ENCODE measurements at regions of chr1 and their contacts with region 1.

Region 1: DNA sequence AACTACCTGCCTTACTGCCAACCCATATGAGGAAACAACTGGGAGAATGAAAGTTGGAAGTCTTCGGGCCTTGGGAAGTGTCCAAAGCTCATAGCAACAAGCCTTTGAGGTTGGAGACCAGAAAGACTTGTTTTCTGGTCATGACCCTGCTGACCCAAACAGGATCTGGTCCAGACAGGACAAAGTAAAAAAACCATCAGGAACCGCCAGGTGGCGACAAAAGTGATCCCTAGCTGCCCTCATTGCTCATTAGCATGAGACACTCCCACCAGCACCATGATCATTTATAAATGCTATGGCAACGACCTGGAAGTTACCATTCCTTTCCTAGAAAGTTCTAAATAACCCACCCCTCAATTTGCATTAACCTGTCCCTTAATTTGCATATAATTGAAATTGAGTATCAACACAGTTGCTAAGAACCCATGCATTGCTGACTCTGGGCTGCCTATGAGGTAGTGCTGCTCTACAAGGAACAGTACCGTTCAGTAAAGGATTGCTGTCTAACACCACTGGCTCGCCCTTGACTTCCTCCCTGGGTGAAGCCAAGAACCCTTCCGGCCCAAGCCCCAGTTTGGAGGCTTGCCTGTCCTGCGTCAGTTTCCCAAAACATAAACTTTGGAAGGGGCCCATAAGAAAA is 89.0 kb downstream of the URB2 start:
- DNase-seq: peak; percentile 47 to 84 (median 52)
- ATAC-seq: peak; percentile 94
- H3K4me3 ChIP-seq: no peak overlapping the region
- H3K27ac ChIP-seq: no peak overlapping the region
- H3K4me1 ChIP-seq: no peaks in the 10 kb centered on the region
- H3K27me3 ChIP-seq: no peaks in the 10 kb centered on the region
- CTCF ChIP-seq: peak; percentile 75 to 87 (median 83)
- EP300 ChIP-seq: no peak
- POLR2A ChIP-seq: no peak
- RAD21 ChIP-seq: peak; percentile 59 to 85

Region 2: GRCh38 chr1:229781453-229781852 is 66.4 kb after region 1 on chr1:
- CTCF ChIA-PET with region 1: no interaction called
- POLR2A ChIA-PET with region 1: no interaction called
- in situ Hi-C with region 1: no loop called
- intact Hi-C with region 1: no loop called
- DNase-seq: no peak
- ATAC-seq: no peak
- H3K4me3 ChIP-seq: no peak overlapping the region
- H3K27ac ChIP-seq: no peak overlapping the region
- H3K4me1 ChIP-seq: no peaks in the 10 kb centered on the region
- H3K27me3 ChIP-seq: peaks cover 31 to 58% of the 10 kb centered on the region in 2 experiments
- CTCF ChIP-seq: no peak
- EP300 ChIP-seq: no peak
- POLR2A ChIP-seq: no peak
- RAD21 ChIP-seq: no peak

Region 3: DNA sequence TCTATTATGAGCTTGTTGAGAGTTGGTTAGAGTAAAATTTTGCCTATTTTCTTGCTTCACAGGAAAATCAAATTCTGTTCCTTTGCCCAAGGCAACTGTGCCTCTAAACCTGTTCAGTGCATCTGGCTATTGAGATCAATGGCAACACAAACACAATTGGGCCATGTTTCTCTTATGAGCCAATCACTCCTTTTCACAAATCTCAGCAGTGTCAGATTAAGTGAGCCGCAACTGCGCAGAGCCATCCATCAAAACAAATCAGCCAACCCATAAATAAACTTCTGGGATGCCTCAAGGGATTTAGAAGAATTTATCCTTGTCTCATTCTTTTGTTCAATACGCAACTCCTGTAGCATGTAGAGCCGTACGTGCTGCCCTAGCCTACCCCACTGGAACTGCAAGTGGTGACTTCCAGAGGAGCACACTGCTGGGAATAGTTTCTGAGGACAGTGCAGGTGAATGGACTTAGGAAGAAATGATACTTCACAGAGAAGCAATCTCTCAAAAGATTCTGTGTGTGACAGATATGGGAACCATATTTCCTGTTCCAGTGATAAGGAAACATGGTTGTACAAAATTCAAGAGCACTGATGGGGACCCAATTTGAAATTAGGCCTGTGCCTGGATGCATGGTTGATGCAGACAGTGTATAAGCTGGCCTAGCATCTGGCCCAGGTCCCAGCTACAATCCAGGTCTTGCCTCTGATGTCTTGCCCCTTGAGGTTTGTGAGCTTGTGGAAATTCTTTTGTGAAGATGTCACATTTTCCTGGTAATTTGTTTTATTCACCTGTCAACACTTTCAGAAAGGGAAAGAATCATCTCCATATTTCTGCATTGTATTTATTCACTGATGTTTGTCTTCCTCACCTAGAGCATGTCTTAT is 77.2 kb after region 1 on chr1:
- CTCF ChIA-PET with region 1: no interaction called
- POLR2A ChIA-PET with region 1: no interaction called
- in situ Hi-C with region 1: no loop called
- intact Hi-C with region 1: loop called (anchors 5 kb)
- DNase-seq: no peak
- ATAC-seq: no peak
- H3K4me3 ChIP-seq: no peak overlapping the region
- H3K27ac ChIP-seq: no peak overlapping the region
- H3K4me1 ChIP-seq: no peaks in the 10 kb centered on the region
- H3K27me3 ChIP-seq: peaks cover 15 to 20% of the 10 kb centered on the region in 2 experiments; a peak in 4 of 5 replicates
- CTCF ChIP-seq: no peak
- EP300 ChIP-seq: no peak
- POLR2A ChIP-seq: no peak
- RAD21 ChIP-seq: no peak

Region 4: GRCh38 chr1:229848752-229849677 is 133.9 kb after region 1 on chr1:
- CTCF ChIA-PET with region 1: interaction called, 3 read pairs
- POLR2A ChIA-PET with region 1: no interaction called
- in situ Hi-C with region 1: no loop called
- intact Hi-C with region 1: loop called (anchors 5 kb)
- DNase-seq: peak; percentile 58 to 67 (median 64)
- ATAC-seq: peak; percentile 90
- H3K4me3 ChIP-seq: no peak overlapping the region
- H3K27ac ChIP-seq: no peak overlapping the region
- H3K4me1 ChIP-seq: no peaks in the 10 kb centered on the region
- H3K27me3 ChIP-seq: peaks cover 5 to 53% of the 10 kb centered on the region in 2 experiments; a peak in 3 of 5 replicates
- CTCF ChIP-seq: peak; percentile 62 to 80 (median 78)
- EP300 ChIP-seq: no peak
- POLR2A ChIP-seq: no peak
- RAD21 ChIP-seq: peak; percentile 20 to 55; a peak in 3 of 4 replicates

Region 5: GRCh38 chr1:230310381-230311163 is 595.5 kb after region 1 on chr1:
- CTCF ChIA-PET with region 1: interaction called, 13 read pairs
- POLR2A ChIA-PET with region 1: no interaction called
- in situ Hi-C with region 1: loop called (anchors 25 kb)
- intact Hi-C with region 1: loop called (anchors 1 kb)
- DNase-seq: peak; percentile 88 to 92 (median 90)
- ATAC-seq: peak; percentile 95
- H3K4me3 ChIP-seq: no peak overlapping the region
- H3K27ac ChIP-seq: no peak overlapping the region
- H3K4me1 ChIP-seq: no peaks in the 10 kb centered on the region
- H3K27me3 ChIP-seq: peaks cover 30 to 49% of the 10 kb centered on the region in 2 experiments
- CTCF ChIP-seq: peak; percentile 87 to 97 (median 95)
- EP300 ChIP-seq: no peak
- POLR2A ChIP-seq: no peak
- RAD21 ChIP-seq: peak; percentile 98